Naive thymus-derived CD4-positive, alpha-beta T cell (primary cell): ENCODE measurements at regions of chr3 and their contacts with region 1.

Region 1: DNA sequence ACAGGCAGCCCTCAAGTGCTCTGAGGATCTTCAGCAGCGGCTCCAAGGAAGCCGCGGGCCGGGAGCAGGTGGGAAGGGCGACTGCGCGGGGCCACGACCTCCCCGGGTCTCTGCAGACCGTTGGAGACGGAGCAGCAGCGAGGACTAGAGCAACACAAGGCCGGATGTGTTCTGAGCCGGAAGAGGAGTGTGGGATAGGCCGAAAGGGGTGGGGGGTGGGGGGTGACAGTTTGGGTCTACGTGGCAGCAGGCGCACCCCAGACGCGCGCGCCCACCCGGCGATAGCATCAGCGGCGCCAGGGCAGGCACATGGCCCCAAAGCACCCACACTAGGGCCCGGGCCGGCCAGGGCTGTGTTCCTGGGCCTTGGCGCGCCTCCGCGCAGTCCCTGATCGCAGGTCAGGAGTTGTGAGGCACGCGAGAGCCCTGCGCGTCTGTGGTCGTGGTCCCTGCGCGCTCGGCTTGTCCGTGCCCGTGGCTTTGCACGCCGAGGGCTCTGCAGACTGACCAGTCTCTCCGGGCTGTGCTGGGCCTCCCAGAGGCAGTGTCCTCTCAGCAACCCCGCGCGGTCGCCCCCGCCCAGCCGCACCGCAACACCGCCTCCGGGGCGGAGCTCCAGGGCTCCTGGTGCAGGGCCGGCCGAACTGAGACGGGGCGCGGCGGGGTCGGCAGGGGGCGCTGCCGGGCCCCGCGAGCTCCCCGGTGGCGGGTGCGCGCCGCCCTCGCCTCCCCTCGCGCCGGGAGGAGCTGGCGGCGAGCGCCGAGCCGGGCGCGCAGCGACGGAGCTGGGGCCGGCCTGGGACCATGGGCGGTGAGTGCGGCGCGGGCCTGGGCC is at the start of gene PXYLP1:
- DNase-seq: peak; percentile 83 to 97 (median 91)
- ATAC-seq: peak; percentile 98
- H3K4me3 ChIP-seq: peak within 1 kb of the TSS; percentile 72
- H3K4me3 Mint-ChIP-seq: peak within 1 kb of the TSS; percentile 85 to 94 (median 92)
- H3K27ac ChIP-seq: peak within 1 kb of the TSS; percentile 85
- H3K27ac Mint-ChIP-seq: peak within 1 kb of the TSS; percentile 91 to 98 (median 98)
- H3K4me1 ChIP-seq: peaks cover 6 to 33% of the 10 kb centered on the region in 2 donors
- H3K4me1 Mint-ChIP-seq: peaks cover 50 to 66% (median 54%) of the 10 kb centered on the region in 7 donors
- H3K27me3 ChIP-seq: no peaks in the 10 kb centered on the region
- H3K27me3 Mint-ChIP-seq: peaks cover 0 to 6% (median 0%) of the 10 kb centered on the region in 5 donors
- total RNA-seq, gene PXYLP1: 18.6 to 40.9 (median 23.2) TPM

Region 2: DNA sequence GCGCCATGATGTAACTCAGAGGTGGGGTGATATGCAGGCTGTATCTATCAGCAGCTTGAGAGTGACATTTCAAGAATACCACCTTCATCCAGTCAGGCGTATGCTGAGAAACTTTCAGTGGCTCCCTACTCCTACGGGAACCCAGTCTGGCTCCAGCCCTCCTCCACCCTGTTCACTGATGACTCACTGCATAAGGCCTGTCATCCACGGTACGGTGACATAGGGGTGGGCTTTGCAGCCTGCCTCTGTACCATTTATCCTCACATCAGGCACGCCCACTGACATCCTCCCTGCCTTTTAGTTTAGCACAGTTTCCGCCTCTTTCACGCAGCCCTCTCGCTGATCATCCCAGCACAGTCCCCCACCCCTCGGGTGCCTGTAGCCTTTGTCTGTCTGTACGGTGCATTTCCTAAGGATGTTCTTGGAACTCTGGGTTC is 12.0 kb after region 1 on chr3:
- CTCF ChIA-PET with region 1: interaction called, 19 read pairs
- POLR2A ChIA-PET with region 1: interaction called, 57 read pairs
- intact Hi-C with region 1: loop called (anchors 1 kb)
- DNase-seq: peak in 8 of 9 donors; percentile 54 to 79 (median 66)
- ATAC-seq: peak; percentile 94
- H3K4me3 ChIP-seq: peak overlapping the region; percentile 15
- H3K4me3 Mint-ChIP-seq: peak overlapping the region; percentile 55 to 83 (median 65)
- H3K27ac ChIP-seq: peak overlapping the region; percentile 62
- H3K27ac Mint-ChIP-seq: peak overlapping the region; percentile 42 to 89 (median 86)
- H3K4me1 ChIP-seq: peaks cover 6 to 34% of the 10 kb centered on the region in 2 donors
- H3K4me1 Mint-ChIP-seq: peaks cover 25 to 85% (median 55%) of the 10 kb centered on the region in 7 donors
- H3K27me3 ChIP-seq: no peaks in the 10 kb centered on the region
- H3K27me3 Mint-ChIP-seq: no peaks in the 10 kb centered on the region

Region 3: GRCh38 chr3:141255846-141256261 is 24.5 kb after region 1 on chr3:
- CTCF ChIA-PET with region 1: interaction called, 82 read pairs
- POLR2A ChIA-PET with region 1: interaction called, 516 read pairs
- intact Hi-C with region 1: loop called (anchors 1 kb)
- DNase-seq: peak in 7 of 9 donors; percentile 54 to 76 (median 67)
- ATAC-seq: peak; percentile 91
- H3K4me3 ChIP-seq: no peak overlapping the region
- H3K4me3 Mint-ChIP-seq: peak overlapping the region in 8 of 10 donors; percentile 38 to 62 (median 52)
- H3K27ac ChIP-seq: peak overlapping the region; percentile 28
- H3K27ac Mint-ChIP-seq: peak overlapping the region; percentile 38 to 92 (median 79)
- H3K4me1 ChIP-seq: peaks cover 0 to 12% of the 10 kb centered on the region in 2 donors
- H3K4me1 Mint-ChIP-seq: peaks cover 16 to 88% (median 45%) of the 10 kb centered on the region in 7 donors
- H3K27me3 ChIP-seq: no peaks in the 10 kb centered on the region
- H3K27me3 Mint-ChIP-seq: no peaks in the 10 kb centered on the region

Region 4: GRCh38 chr3:141279077-141279967 is 48.0 kb after region 1 on chr3:
- CTCF ChIA-PET with region 1: interaction called, 54 read pairs
- POLR2A ChIA-PET with region 1: interaction called, 516 read pairs
- intact Hi-C with region 1: loop called (anchors 1 kb)
- DNase-seq: peak in 7 of 9 donors; percentile 23 to 58 (median 46)
- ATAC-seq: peak; percentile 82
- H3K4me3 ChIP-seq: no peak overlapping the region
- H3K4me3 Mint-ChIP-seq: peak overlapping the region in 1 of 10 donors; percentile 17
- H3K27ac ChIP-seq: no peak overlapping the region
- H3K27ac Mint-ChIP-seq: peak overlapping the region in 6 of 9 donors; percentile 1 to 83 (median 44)
- H3K4me1 ChIP-seq: peaks cover 10 to 19% of the 10 kb centered on the region in 2 donors
- H3K4me1 Mint-ChIP-seq: peaks cover 14 to 36% (median 21%) of the 10 kb centered on the region in 7 donors
- H3K27me3 ChIP-seq: no peaks in the 10 kb centered on the region
- H3K27me3 Mint-ChIP-seq: no peaks in the 10 kb centered on the region

Region 5: GRCh38 chr3:141370065-141370533 is 138.8 kb after region 1 on chr3:
- CTCF ChIA-PET with region 1: no interaction called
- POLR2A ChIA-PET with region 1: no interaction called
- intact Hi-C with region 1: loop called in 1 of 2 experiments (anchors 5 kb)
- DNase-seq: peak; percentile 17 to 90 (median 81)
- ATAC-seq: peak; percentile 99
- H3K4me3 ChIP-seq: no peak overlapping the region
- H3K4me3 Mint-ChIP-seq: no peak overlapping the region
- H3K27ac ChIP-seq: no peak overlapping the region
- H3K27ac Mint-ChIP-seq: peak overlapping the region in 6 of 9 donors; percentile 13 to 76 (median 46)
- H3K4me1 ChIP-seq: no peaks in the 10 kb centered on the region
- H3K4me1 Mint-ChIP-seq: peaks cover 4 to 17% (median 7%) of the 10 kb centered on the region in 7 donors
- H3K27me3 ChIP-seq: no peaks in the 10 kb centered on the region
- H3K27me3 Mint-ChIP-seq: peaks cover 0 to 3% (median 0%) of the 10 kb centered on the region in 5 donors

Region 6: GRCh38 chr3:141553055-141553454 is 321.7 kb after region 1 on chr3:
- CTCF ChIA-PET with region 1: no interaction called
- POLR2A ChIA-PET with region 1: no interaction called
- intact Hi-C with region 1: loop called in 1 of 2 experiments (anchors 10 kb)
- DNase-seq: peak in 7 of 9 donors; percentile 60 to 88 (median 78)
- ATAC-seq: peak; percentile 93
- H3K4me3 ChIP-seq: peak overlapping the region; percentile 12
- H3K4me3 Mint-ChIP-seq: peak overlapping the region in 9 of 10 donors; percentile 15 to 74 (median 53)
- H3K27ac ChIP-seq: peak overlapping the region; percentile 59
- H3K27ac Mint-ChIP-seq: peak overlapping the region; percentile 32 to 90 (median 77)
- H3K4me1 ChIP-seq: peaks cover 24 to 73% of the 10 kb centered on the region in 2 donors
- H3K4me1 Mint-ChIP-seq: peaks cover 36 to 72% (median 63%) of the 10 kb centered on the region in 7 donors
- H3K27me3 ChIP-seq: no peaks in the 10 kb centered on the region
- H3K27me3 Mint-ChIP-seq: no peaks in the 10 kb centered on the region

Region 7: DNA sequence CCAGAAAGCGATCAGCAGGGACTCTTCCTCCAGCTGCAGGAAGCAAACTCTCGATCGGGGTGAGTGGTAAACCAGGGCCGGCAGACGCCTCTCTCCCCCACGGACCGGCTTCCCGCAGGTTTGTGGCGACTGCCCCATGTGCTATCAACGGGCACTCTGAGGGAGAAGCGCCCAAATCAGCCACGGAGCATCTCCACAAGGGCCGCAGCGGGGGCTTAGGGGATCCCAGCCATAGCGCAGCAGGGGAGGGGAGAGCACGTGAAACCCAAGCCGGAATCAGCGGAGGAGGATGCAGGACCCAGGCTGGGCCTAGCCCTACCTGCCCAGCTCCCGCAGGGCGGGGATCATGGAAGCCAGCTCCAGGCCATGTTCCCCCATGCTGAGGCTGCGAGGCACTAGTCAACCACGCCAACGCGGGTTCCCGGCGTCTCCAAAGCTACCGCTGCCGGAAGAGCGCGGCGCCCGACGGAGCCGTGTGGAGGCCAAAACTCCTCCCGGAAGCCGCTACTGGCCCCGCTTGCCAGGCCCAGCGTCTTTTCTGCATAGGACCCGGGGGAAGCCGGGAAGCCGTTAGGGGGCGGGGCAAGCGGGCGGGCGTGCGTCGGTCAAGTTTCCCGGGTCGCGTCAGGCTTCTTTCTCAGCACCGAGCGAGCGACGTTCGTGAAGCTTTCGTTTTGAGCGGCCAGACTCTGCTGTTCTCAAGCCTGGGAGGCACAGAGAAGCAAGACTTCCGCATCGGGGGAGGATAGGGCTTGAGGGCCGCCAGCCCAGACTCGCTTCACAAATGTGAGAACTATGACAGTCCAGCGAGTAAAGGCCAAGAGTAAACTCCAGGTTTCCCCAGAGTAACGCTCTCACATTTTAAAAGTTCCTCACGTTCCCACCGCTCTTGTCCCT is 1347.3 kb after region 1 on chr3 and contains the start of gene ATR:
- CTCF ChIA-PET with region 1: no interaction called
- POLR2A ChIA-PET with region 1: no interaction called
- intact Hi-C with region 1: loop called in 1 of 2 experiments (anchors 1 kb)
- DNase-seq: peak; percentile 89 to 96 (median 95)
- ATAC-seq: peak; percentile 96
- H3K4me3 ChIP-seq: peak within 1 kb of the TSS; percentile 97
- H3K4me3 Mint-ChIP-seq: peak within 1 kb of the TSS; percentile 93 to 99 (median 97)
- H3K27ac ChIP-seq: peak within 1 kb of the TSS; percentile 94
- H3K27ac Mint-ChIP-seq: peak within 1 kb of the TSS; percentile 96 to 99 (median 98)
- H3K4me1 ChIP-seq: peaks cover 25 to 26% of the 10 kb centered on the region in 2 donors
- H3K4me1 Mint-ChIP-seq: peaks cover 45 to 60% (median 54%) of the 10 kb centered on the region in 7 donors
- H3K27me3 ChIP-seq: no peaks in the 10 kb centered on the region
- H3K27me3 Mint-ChIP-seq: peaks cover 0 to 20% (median 0%) of the 10 kb centered on the region in 5 donors
- total RNA-seq, gene ATR: 31.3 to 48.3 (median 36.2) TPM